ENCODE measurements at regions of chr1 and their contacts with region 1.

Region 1: DNA sequence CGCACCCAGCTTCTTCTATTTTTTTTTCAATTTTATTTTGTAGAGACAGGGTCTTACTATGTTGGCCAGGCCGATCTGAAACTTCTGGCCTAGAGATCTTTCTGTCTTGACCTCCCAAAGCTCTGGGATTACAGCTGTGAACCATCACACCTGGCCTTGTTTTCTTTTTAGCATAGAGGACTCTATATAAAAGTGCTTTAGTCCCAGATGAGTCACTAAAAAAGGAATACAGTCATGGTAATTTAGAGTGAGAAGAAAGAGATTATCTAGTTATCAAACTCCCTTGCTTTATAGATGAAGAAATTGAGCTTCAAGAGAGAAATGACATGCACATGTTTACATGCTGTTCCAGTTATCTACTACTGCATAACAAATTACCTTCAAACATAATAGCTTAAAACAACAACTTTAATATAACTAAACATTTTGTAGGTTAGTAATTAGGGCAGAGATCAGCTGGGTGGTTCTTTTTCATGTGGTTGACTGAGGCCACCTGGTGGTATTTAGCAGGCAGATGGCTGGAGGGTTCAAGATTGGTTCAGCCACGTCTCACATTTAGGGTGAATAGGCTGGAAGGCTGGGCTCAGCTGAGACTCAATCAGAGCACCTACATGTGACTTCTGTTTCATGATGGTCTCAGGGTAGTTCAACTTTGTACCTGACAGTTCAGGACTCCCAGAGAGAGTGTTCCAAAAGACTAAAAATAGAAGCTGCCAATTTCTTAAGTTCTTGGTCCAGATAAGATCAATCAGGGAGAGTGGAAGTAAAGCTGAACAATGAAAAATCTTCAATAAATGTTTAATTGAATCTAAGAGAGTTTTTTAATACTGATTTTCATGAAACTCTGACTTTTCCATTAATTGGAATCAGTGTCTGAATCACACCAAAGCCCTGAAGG is 16.9 kb upstream of the MTF2 start:
- H3K4me3 ChIP-seq: no peak overlapping the region
- H3K27ac ChIP-seq: no peak overlapping the region
- H3K4me1 ChIP-seq: no peaks in the 10 kb centered on the region
- CTCF ChIP-seq: peak; percentile 47; the same call in 1 of the 2 replicates

Region 2: DNA sequence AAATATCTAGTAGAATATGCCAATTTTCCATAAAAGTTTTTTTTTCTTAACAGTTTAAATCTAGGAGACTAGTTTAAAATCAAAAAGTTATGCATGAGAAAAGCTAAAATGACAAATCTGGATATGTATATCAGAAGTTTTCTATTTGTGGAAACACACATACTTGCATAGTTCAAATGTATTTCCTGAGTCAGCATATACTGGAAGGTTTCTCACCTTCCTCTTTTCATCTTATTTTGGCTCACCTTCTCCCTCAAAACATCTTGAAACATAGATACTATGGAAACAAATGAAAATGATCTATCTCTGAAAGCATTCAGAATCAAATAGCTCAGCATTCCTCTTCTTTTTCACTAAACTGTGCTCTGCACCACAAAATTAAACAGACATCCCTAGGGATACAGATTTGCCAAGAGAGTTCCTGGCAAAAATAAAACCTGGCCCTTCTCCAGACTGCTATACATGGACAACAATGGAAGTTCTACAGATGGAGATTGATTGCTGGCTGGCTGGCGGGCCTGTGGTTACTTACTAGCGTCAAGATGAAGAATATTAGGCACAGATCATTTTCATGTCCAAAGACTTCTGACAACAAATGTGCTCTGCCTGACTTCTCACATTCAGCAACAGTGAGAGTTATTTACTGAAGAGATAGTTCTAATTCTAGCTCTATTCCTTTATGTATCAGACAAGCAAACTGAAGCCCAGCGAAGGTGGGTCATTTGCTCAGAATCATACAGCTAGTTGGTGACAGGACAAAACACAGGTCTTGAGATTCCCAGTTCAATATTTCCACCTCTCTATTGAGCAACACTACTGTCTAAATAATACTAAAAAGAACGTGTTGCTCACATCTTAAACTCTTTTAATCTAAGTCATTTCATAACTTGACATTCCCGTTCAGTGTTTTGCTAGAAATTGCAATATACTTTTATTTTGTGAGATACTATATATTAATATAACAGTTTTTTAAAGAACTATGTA is 127.5 kb before region 1 on chr1:
- CTCF ChIA-PET with region 1: no interaction called
- POLR2A ChIA-PET with region 1: no interaction called
- H3K4me3 ChIP-seq: no peak overlapping the region
- H3K27ac ChIP-seq: peak overlapping the region; percentile 55
- H3K4me1 ChIP-seq: peaks cover 6% of the 10 kb centered on the region; the same call in 1 of the 2 replicates
- CTCF ChIP-seq: no peak

Region 3: DNA sequence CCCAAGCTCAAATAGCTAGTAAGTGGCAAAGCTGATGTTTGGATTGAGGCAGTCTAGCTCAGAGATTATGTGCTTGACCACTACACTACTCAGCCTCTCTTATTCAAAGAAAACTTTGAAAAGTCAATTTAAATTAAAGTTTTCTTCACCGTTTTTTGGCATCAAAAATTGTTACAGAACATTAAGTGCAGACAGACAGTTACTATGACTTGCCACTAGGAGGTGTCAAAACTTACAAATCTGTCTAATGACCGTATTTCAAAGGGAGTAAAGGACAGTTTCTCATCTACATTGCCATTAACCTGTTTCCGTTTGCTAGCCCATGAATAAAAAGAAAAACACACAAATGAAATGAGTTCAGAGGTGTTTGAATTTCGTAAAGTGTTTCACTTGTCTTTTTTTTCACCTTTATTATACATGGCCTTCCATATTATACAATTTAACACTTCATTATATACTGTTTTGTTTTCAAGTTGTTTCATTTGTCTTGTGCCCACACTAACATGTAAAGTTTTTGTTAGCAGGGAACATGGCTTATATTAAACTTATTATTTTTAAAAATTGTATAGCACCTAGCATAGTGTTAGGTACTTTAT is 40.5 kb before region 1 on chr1:
- CTCF ChIA-PET with region 1: interaction called, 48 read pairs
- POLR2A ChIA-PET with region 1: no interaction called
- H3K4me3 ChIP-seq: no peak overlapping the region
- H3K27ac ChIP-seq: no peak overlapping the region
- H3K4me1 ChIP-seq: no peaks in the 10 kb centered on the region
- CTCF ChIP-seq: peak; percentile 11; the same call in 1 of the 2 replicates

Region 4: GRCh38 chr1:93036672-93037071 is 25.5 kb before region 1 on chr1:
- CTCF ChIA-PET with region 1: interaction called, 10 read pairs
- POLR2A ChIA-PET with region 1: no interaction called
- H3K4me3 ChIP-seq: no peak overlapping the region
- H3K27ac ChIP-seq: no peak overlapping the region
- H3K4me1 ChIP-seq: no peaks in the 10 kb centered on the region
- CTCF ChIP-seq: no peak

Measured in HEK293 (cell line).